Activated CD8-positive, alpha-beta T cell treated with anti-CD3 and anti-CD28 coated beads, Interleukin-2, amount 10 ng/mL, durations not matched to agents 7 days and 5 days (primary cell): ENCODE measurements at regions of chr1 and their contacts with region 1.

Region 1: GRCh38 chr1:161201828-161202725 is at the start of gene NDUFS2:
- DNase-seq: peak; percentile 99
- ATAC-seq: peak; percentile 99
- H3K4me3 Mint-ChIP-seq: peak within 1 kb of the TSS; percentile 93
- H3K27ac Mint-ChIP-seq: peak within 1 kb of the TSS; percentile 95
- H3K4me1 Mint-ChIP-seq: peaks cover 78% of the 10 kb centered on the region
- H3K27me3 Mint-ChIP-seq: no peaks in the 10 kb centered on the region
- total RNA-seq, gene NDUFS2: 73.6 to 76.8 TPM

Region 2: GRCh38 chr1:160916666-160917065 is 285.4 kb before region 1 on chr1:
- CTCF ChIA-PET with region 1: no interaction called
- POLR2A ChIA-PET with region 1: no interaction called
- DNase-seq: no peak
- ATAC-seq: no peak
- H3K4me3 Mint-ChIP-seq: no peak overlapping the region
- H3K27ac Mint-ChIP-seq: no peak overlapping the region
- H3K4me1 Mint-ChIP-seq: no peaks in the 10 kb centered on the region
- H3K27me3 Mint-ChIP-seq: peaks cover 30% of the 10 kb centered on the region

Region 3: DNA sequence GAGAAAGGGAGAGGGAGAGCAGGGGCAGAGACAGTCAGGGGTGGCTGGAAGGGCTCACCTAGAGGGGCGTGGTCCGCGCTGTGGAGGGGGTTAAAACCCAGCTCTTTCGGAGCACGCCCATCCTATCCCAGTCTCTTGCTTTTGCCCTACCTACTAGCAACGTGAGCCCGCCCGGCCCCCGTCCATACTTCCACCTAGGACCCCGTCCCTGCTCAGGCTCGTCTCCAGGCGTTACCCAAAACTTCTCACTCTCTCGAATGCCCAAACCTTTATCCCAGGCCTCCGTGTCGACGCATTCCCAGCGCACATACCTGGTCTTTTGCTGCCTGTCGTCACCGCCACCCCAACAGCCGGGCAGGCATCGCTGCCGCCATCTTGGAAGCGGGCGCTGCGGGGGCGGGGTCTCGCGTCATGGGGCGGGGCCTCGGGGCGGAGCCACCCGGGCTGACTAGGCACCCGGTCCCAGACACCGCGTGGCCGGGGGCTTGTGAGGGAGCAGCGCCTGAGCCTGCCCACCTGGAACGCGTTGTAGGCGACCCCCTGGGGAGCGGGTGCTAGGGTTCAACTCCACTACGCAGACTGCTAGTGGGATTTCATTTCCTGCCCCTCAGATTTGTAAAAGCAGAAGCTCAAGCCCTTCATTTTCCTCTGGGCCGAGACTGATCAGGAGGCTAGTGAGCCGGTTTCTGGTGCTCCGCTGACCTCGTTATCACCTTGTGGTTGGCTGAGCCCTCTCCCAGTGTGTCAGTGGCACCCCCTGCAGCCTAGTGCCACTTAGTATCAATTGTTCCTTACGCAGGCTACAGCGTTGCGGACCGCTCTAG is 24.8 kb before region 1 on chr1 and contains the start of gene B4GALT3:
- CTCF ChIA-PET with region 1: interaction called, 31 read pairs
- POLR2A ChIA-PET with region 1: interaction called, 26 read pairs
- DNase-seq: peak; percentile 94
- ATAC-seq: peak; percentile 91
- H3K4me3 Mint-ChIP-seq: peak within 1 kb of the TSS; percentile 90
- H3K27ac Mint-ChIP-seq: peak within 1 kb of the TSS; percentile 94
- H3K4me1 Mint-ChIP-seq: peaks cover 56% of the 10 kb centered on the region
- H3K27me3 Mint-ChIP-seq: no peaks in the 10 kb centered on the region
- total RNA-seq, gene B4GALT3: 34.2 to 37.0 TPM

Region 4: GRCh38 chr1:161216945-161217712 is 15.1 kb after region 1 on chr1:
- CTCF ChIA-PET with region 1: interaction called, 331 read pairs
- POLR2A ChIA-PET with region 1: interaction called, 24 read pairs
- DNase-seq: no peak
- ATAC-seq: peak; percentile 33
- H3K4me3 Mint-ChIP-seq: peak overlapping the region; percentile 55
- H3K27ac Mint-ChIP-seq: peak overlapping the region; percentile 77
- H3K4me1 Mint-ChIP-seq: peaks cover 52% of the 10 kb centered on the region
- H3K27me3 Mint-ChIP-seq: no peaks in the 10 kb centered on the region

Region 5: DNA sequence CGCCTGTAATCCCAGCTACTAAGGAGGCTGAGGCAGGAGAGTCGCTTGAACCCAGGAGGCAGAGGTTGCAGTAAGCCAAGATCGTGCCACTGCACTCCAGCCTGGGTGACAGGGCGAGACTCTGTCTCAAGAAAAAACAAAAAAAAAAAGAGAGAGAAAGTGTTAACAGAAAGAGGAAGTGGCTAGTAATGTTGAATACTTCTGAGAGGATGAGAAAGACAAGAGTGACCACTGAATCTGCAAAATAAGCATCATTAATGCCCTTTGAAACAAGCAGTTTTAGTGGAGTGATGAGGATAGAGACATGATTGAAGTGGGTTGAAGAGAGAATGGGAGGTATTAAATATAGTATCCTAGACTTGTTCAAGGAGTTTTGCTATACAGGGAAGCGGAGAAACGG is 96.0 kb after region 1 on chr1:
- CTCF ChIA-PET with region 1: no interaction called
- POLR2A ChIA-PET with region 1: no interaction called
- DNase-seq: no peak
- ATAC-seq: no peak
- H3K4me3 Mint-ChIP-seq: no peak overlapping the region
- H3K27ac Mint-ChIP-seq: no peak overlapping the region
- H3K4me1 Mint-ChIP-seq: peaks cover 9% of the 10 kb centered on the region
- H3K27me3 Mint-ChIP-seq: no peaks in the 10 kb centered on the region